Heart right ventricle (tissue), 16 donors: ENCODE measurements at regions of chr2 and their contacts with region 1.

Region 1: GRCh38 chr2:229273723-229274338 is 2.7 kb upstream of the PID1 start:
- DNase-seq: peak; percentile 16 to 64
- ATAC-seq: peak; percentile 59 to 83 (median 80)
- H3K4me3 ChIP-seq: peak overlapping the region in 7 of 10 donors; percentile 23 to 44 (median 37)
- H3K27ac ChIP-seq: no peak overlapping the region
- H3K4me1 ChIP-seq: peaks cover 0 to 13% (median 3%) of the 10 kb centered on the region in 9 donors
- H3K27me3 ChIP-seq: peaks cover 0 to 37% (median 10%) of the 10 kb centered on the region in 7 donors
- CTCF ChIP-seq: peak; percentile 26 to 85 (median 77)

Region 2: GRCh38 chr2:227890495-227891079 is 1383.2 kb before region 1 on chr2:
- intact Hi-C with region 1: loop called in 2 of 10 experiments (anchors 10 kb)
- DNase-seq: no peak
- ATAC-seq: peak in 3 of 8 donors; percentile 49 to 68 (median 51)
- H3K4me3 ChIP-seq: no peak overlapping the region
- H3K27ac ChIP-seq: no peak overlapping the region
- H3K4me1 ChIP-seq: no peaks in the 10 kb centered on the region
- H3K27me3 ChIP-seq: no peaks in the 10 kb centered on the region
- CTCF ChIP-seq: peak; percentile 39 to 80 (median 72)

Region 3: DNA sequence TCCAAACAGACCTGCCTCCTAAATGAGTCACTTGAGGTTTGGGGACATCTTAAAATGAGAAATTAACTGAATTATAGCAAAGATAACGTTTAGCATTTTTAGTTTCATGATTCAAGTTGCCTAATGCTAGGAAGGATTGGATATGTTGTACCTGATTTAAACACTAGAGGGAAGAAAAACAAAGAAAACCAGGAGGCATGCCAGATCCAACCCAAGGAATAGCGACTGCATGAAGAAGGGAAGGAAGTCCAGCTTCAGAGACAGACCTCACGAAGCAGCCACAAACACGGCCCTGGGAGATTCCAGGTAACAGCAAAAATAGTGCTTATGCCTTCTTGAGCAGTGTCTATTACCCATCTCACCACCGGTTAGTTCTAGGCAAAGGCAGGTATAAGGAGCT is 592.4 kb before region 1 on chr2:
- intact Hi-C with region 1: loop called in 4 of 10 experiments (anchors 5 kb)
- DNase-seq: no peak
- ATAC-seq: peak in 2 of 8 donors; percentile 30 to 47
- H3K4me3 ChIP-seq: no peak overlapping the region
- H3K27ac ChIP-seq: no peak overlapping the region
- H3K4me1 ChIP-seq: no peaks in the 10 kb centered on the region
- H3K27me3 ChIP-seq: no peaks in the 10 kb centered on the region
- CTCF ChIP-seq: peak in 8 of 9 donors; percentile 14 to 59 (median 50)

Region 4: DNA sequence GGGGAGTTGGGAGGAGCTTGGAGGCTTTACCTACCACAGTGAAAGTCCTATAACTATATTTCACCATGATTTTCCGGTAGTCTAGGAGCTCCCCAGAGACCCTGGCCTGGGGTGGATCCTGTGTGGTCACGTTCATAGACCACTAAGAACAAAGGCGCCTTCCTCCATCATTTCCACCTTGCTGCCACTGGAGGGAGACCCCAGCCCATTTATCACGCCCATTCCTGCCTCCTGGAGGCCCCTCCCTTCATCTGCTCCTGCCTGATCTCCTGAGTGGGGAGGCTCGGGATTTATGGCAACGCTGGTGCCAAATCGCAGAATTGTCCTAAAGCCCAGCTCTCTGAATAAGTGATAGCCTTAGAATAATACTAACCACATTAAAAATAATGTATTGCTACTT is 584.8 kb before region 1 on chr2:
- intact Hi-C with region 1: loop called in 7 of 10 experiments (anchors 5 to 10 kb)
- DNase-seq: no peak
- ATAC-seq: no peak
- H3K4me3 ChIP-seq: no peak overlapping the region
- H3K27ac ChIP-seq: no peak overlapping the region
- H3K4me1 ChIP-seq: no peaks in the 10 kb centered on the region
- H3K27me3 ChIP-seq: no peaks in the 10 kb centered on the region
- CTCF ChIP-seq: peak in 3 of 9 donors; percentile 10 to 24 (median 13)

Region 5: GRCh38 chr2:228699400-228699799 is 574.4 kb before region 1 on chr2:
- intact Hi-C with region 1: loop called in 9 of 10 experiments (anchors 5 to 10 kb)
- DNase-seq: no peak
- ATAC-seq: peak in 5 of 8 donors; percentile 52 to 80 (median 66)
- H3K4me3 ChIP-seq: no peak overlapping the region
- H3K27ac ChIP-seq: no peak overlapping the region
- H3K4me1 ChIP-seq: no peaks in the 10 kb centered on the region
- H3K27me3 ChIP-seq: no peaks in the 10 kb centered on the region
- CTCF ChIP-seq: peak in 8 of 9 donors; percentile 8 to 59 (median 42)

Region 6: DNA sequence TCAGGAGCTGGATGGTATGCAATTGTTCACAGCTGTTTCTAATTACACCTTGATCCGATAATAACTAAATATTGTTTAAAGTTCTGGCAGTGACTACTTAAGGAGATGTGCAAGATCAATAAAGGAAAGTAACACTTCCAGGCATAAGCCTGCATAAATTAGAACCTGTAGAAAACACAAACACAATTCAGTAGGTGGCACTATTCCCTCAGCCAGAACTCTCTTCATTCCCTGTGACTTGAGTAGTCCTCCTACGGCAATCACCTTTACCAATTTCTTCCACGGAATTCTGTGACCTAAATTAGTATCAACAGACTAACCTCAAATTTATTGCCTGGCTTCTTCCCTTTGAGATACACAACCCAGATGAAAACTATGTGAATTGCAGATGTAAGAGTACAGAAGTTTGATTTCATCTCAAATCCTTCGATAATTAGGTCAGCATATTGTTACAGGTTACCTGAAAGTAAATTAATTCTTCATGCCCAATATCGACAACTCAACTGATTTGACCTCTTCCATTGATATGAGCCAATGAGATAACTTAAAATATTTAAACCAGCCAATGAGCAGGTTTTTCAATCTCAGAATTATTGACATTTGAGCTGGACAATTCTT is 140.6 kb before region 1 on chr2:
- intact Hi-C with region 1: loop called in 7 of 10 experiments (anchors 2 to 5 kb)
- DNase-seq: peak in 1 of 2 donors; percentile 18
- ATAC-seq: peak in 2 of 8 donors; percentile 50 to 51
- H3K4me3 ChIP-seq: no peak overlapping the region
- H3K27ac ChIP-seq: no peak overlapping the region
- H3K4me1 ChIP-seq: peaks cover 0 to 15% (median 8%) of the 10 kb centered on the region in 9 donors
- H3K27me3 ChIP-seq: no peaks in the 10 kb centered on the region
- CTCF ChIP-seq: peak; percentile 14 to 65 (median 49)

Region 7: DNA sequence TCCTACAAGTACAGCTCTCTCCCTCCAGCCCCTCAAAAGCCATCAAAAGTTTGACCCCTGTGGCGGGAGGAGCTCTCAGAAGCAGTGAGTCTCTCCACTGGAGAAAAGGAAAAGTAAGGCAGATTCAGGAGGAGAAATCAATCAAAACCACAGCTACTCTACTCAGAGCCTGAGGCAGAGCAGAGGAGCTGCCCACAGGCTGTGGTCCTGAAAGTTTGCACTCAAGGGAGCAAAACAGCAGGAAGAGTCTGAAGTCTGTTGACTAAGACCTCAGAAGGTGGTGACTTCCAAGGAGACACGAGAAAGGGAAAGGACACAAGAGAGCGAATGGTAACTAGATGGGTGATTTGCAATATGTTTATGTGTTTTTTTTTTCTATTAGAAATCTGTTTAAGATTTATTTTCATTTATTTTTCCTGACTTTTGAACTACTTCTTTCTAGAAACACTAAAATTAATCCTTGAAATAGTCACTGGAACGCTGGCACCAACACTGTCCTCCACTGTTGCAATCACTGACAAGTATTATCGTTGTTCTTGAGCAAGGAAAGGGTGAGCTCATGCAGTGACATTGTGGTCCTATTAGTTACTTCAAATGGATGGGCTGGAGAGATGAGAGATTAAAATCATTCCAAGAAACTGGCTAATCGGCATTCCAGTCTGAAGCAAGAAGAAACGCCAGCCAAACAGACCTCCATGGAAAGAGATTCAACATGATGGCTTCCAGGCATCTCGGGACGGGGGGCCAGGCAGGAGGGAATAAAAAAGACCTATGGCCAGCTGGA is 38.5 kb before region 1 on chr2:
- intact Hi-C with region 1: no loop called
- DNase-seq: no peak
- ATAC-seq: peak in 1 of 8 donors; percentile 67
- H3K4me3 ChIP-seq: no peak overlapping the region
- H3K27ac ChIP-seq: no peak overlapping the region
- H3K4me1 ChIP-seq: no peaks in the 10 kb centered on the region
- H3K27me3 ChIP-seq: peaks cover 0 to 3% (median 0%) of the 10 kb centered on the region in 7 donors
- CTCF ChIP-seq: no peak

Region 8: GRCh38 chr2:229392196-229392595 is 118.4 kb after region 1 on chr2:
- intact Hi-C with region 1: no loop called
- DNase-seq: no peak
- ATAC-seq: peak in 7 of 8 donors; percentile 30 to 88 (median 72)
- H3K4me3 ChIP-seq: no peak overlapping the region
- H3K27ac ChIP-seq: peak overlapping the region in 7 of 10 donors; percentile 3 to 79 (median 39)
- H3K4me1 ChIP-seq: peaks cover 0 to 12% (median 0%) of the 10 kb centered on the region in 9 donors
- H3K27me3 ChIP-seq: no peaks in the 10 kb centered on the region
- CTCF ChIP-seq: no peak